Activated CD4-positive, alpha-beta T cell treated with anti-CD3 and anti-CD28 coated beads, Interleukin-2, amount 10 ng/mL, durations not matched to agents 24 days and 14 days (primary cell): ENCODE measurements at regions of chr17 and their contacts with region 1.

Region 1: GRCh38 chr17:66437476-66438026 is 135.1 kb downstream of the PRKCA start:
- DNase-seq: no peak
- H3K4me3 Mint-ChIP-seq: no peak overlapping the region
- H3K27ac Mint-ChIP-seq: peak overlapping the region; percentile 67
- H3K4me1 Mint-ChIP-seq: peaks cover 37% of the 10 kb centered on the region
- H3K27me3 Mint-ChIP-seq: no peaks in the 10 kb centered on the region

Region 2: GRCh38 chr17:66451188-66452169 is 13.9 kb after region 1 on chr17:
- intact Hi-C with region 1: loop called (anchors 2 kb)
- DNase-seq: no peak
- H3K4me3 Mint-ChIP-seq: no peak overlapping the region
- H3K27ac Mint-ChIP-seq: peak overlapping the region; percentile 31
- H3K4me1 Mint-ChIP-seq: peaks cover 28% of the 10 kb centered on the region
- H3K27me3 Mint-ChIP-seq: no peaks in the 10 kb centered on the region